Caco-2 (cell line): ENCODE measurements at regions of chr16 and their contacts with region 1.

Region 1: GRCh38 chr16:4693296-4693955 is at the start of gene NUDT16L1:
- DNase-seq: peak; percentile 92 to 97
- H3K4me3 ChIP-seq: peak within 1 kb of the TSS; percentile 100
- H3K4me3 Mint-ChIP-seq: peak within 1 kb of the TSS; percentile 76
- H3K27ac Mint-ChIP-seq: peak within 1 kb of the TSS; percentile 63
- H3K4me1 ChIP-seq: 0 out of 2 replicates have a peak, but pooled peaks cover 6% of the 10 kb centered on the region
- H3K4me1 Mint-ChIP-seq: no peaks in the 10 kb centered on the region
- H3K27me3 ChIP-seq: no peaks in the 10 kb centered on the region
- H3K27me3 Mint-ChIP-seq: no peaks in the 10 kb centered on the region
- CTCF ChIP-seq: no peak
- total RNA-seq, gene NUDT16L1: 27.9 and 31.3 TPM in 2 replicates

Region 2: DNA sequence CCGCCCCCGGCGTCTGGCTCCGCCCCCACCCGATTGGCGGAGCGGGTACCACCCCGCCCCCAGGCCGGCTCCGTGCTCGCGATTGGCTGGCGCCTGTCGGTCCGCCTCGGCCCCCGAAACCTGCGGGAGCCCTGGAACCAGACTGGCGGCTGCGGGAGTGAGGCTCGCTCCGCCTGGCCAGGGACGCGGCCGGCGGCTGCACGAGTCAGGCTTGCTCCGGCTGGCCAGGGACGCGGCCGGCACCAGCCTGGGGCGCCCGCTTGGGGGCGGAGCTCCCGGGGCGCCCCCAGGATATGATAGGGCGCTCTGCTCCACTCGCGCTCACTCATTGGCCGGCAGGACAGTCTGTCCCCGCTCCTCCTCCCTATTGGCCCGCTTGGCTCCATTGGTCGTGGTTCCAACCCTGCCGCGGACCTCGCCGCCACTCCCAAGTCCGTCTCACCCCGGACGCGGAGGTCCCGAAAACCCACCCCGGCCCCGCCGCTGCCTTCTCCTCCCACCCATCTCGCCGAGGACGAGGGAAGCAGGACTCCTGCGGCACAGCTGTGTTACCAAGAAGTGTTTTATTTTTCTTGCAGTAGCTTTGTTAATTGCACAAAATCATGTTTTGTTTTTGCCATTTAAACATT is 109.3 kb after region 1 on chr16:
- CTCF ChIA-PET with region 1: no interaction called
- POLR2A ChIA-PET with region 1: interaction called, 3 read pairs
- intact Hi-C with region 1: loop called (anchors 5 kb)
- DNase-seq: peak; percentile 94
- H3K4me3 ChIP-seq: peak overlapping the region; percentile 74
- H3K4me3 Mint-ChIP-seq: peak overlapping the region; percentile 77
- H3K27ac Mint-ChIP-seq: peak overlapping the region; percentile 48
- H3K4me1 ChIP-seq: peaks cover 9% of the 10 kb centered on the region; the same call in 1 of the 2 replicates
- H3K4me1 Mint-ChIP-seq: peaks cover 10% of the 10 kb centered on the region
- H3K27me3 ChIP-seq: no peaks in the 10 kb centered on the region
- H3K27me3 Mint-ChIP-seq: no peaks in the 10 kb centered on the region
- CTCF ChIP-seq: no peak

Region 3: DNA sequence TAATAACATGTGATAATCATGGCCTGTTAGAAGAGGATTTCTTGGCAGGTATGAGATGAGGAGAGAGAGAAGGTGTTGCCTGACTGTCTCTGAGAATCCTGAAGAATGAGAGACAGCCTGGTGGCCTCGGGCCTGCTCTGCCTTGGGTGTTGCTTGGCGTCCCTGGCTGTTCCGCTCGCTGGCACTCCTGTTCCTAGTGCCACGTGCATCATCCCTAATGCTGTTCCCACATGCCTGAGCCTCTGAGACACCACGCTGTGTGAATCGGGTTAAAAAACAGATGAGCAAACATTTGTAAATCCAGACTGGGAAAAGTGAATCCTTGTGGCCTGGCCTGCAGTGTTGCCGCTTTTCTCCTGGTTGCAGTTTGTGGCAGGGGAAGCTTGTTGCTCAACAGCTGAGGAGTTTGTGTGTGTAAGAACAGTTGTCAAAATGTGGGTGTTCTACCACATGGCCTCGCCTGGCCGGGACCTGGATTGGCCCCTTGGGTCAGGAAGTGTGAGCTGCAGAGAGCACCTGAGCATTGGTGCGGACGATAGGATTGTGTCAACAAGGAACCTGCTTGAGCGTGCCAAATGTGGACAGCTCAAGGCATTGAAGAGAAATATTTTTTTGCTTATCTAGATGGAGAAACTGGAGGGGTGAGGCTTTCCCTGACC is 175.8 kb after region 1 on chr16:
- CTCF ChIA-PET with region 1: no interaction called
- POLR2A ChIA-PET with region 1: no interaction called
- intact Hi-C with region 1: no loop called
- DNase-seq: no peak
- H3K4me3 ChIP-seq: no peak overlapping the region
- H3K4me3 Mint-ChIP-seq: no peak overlapping the region
- H3K27ac Mint-ChIP-seq: no peak overlapping the region
- H3K4me1 ChIP-seq: peaks cover 7% of the 10 kb centered on the region
- H3K4me1 Mint-ChIP-seq: peaks cover 14% of the 10 kb centered on the region
- H3K27me3 ChIP-seq: no peaks in the 10 kb centered on the region
- H3K27me3 Mint-ChIP-seq: no peaks in the 10 kb centered on the region
- CTCF ChIP-seq: no peak